PC-3 (cell line): ENCODE measurements at regions of chr15 and their contacts with region 1.

Region 1: DNA sequence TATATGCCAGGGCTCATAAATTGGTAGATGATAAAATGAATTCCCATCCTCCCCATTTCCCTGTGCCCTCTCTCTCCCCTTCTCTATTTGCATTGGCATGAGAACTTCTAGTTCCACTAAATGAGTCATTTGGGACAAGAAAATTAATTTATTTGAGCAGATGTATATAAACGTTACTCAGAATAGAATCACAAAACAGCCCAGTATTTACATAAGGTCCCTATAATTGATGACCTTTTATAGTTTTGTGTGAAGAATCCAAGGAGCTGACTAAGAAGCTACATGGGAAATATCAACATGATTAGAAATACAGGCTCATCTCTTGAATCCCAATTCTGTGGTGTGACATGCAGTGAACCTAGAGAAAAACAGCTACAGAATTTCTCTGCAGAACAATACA is 617.7 kb upstream of the NR2F2 start:
- DNase-seq: peak; percentile 86
- ATAC-seq: peak; percentile 93
- H3K4me3 ChIP-seq: no peak overlapping the region
- H3K27ac ChIP-seq: peak overlapping the region; percentile 95
- H3K4me1 ChIP-seq: peaks cover 22% of the 10 kb centered on the region
- H3K27me3 ChIP-seq: no peaks in the 10 kb centered on the region
- CTCF ChIP-seq: no peak

Region 2: GRCh38 chr15:95580130-95580529 is 132.7 kb before region 1 on chr15:
- CTCF ChIA-PET with region 1: no interaction called
- POLR2A ChIA-PET with region 1: no interaction called
- intact Hi-C with region 1: no loop called
- DNase-seq: no peak
- ATAC-seq: no peak
- H3K4me3 ChIP-seq: no peak overlapping the region
- H3K27ac ChIP-seq: no peak overlapping the region
- H3K4me1 ChIP-seq: peaks cover 7% of the 10 kb centered on the region
- H3K27me3 ChIP-seq: no peaks in the 10 kb centered on the region
- CTCF ChIP-seq: no peak

Region 3: GRCh38 chr15:96028620-96029019 is 315.8 kb after region 1 on chr15:
- CTCF ChIA-PET with region 1: no interaction called
- POLR2A ChIA-PET with region 1: no interaction called
- intact Hi-C with region 1: loop called (anchors 2 kb)
- DNase-seq: no peak
- ATAC-seq: no peak
- H3K4me3 ChIP-seq: no peak overlapping the region
- H3K27ac ChIP-seq: no peak overlapping the region
- H3K4me1 ChIP-seq: peaks cover 11% of the 10 kb centered on the region
- H3K27me3 ChIP-seq: no peaks in the 10 kb centered on the region
- CTCF ChIP-seq: 0 out of 2 replicates have a peak, but pooled peaks have one; percentile 18